ENCODE measurements at regions of chr18 and their contacts with region 1.

Region 1: DNA sequence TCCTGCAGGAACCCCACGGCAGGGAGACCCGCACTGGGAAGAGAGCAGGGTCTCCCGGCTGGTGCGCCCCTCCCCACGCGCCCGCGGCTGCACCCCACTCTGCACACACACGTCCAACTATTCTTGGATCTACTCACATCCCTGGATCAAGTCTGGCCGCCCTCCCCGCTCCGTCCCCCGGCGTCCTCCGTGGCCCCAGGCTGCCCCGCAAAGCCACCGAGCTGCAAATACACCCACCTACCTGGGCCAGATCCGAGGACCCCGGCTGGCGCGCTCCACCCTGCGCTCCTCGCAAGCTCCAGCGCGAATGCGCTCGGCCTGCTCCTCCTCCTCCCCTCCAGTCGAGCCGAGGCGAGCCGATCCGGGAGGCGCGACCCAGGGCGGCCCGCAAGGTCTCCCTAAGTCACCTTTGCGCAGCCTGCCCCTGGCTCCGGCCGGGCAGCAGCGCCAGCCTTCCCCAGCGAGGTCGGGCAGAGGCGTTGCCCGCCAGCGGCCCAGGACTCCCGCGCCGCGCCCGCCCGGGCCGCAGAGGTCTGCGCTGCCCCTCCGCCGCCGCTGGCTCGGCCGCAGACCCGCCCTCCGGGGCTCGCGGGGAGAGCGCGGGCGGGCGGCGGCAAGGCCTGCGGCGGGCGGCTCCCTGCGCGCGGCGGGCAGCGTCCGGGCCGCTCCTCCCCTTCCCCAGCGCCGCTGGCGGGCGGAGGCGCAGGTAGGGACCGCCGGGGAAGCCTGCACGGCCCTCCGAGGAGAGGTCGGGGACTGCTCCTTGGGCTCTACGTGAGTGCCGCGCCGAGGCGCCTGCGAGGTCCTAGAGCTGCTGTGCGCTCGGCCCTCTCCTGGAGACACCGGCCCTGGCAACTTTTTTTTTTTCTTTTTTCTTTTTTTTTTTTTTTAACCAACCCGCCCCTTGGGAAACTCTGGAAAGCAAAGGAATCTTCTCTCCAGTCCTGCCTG is 126.0 kb downstream of the OSBPL1A start:
- DNase-seq: peak; percentile 29 to 78 (median 68)
- H3K4me3 ChIP-seq: peak overlapping the region; percentile 65 to 98 (median 86)
- H3K27ac ChIP-seq: peak overlapping the region; percentile 90 to 100 (median 98)
- H3K27me3 ChIP-seq: no peaks in the 10 kb centered on the region
- CTCF ChIP-seq: peak in 38 of 56 donors; percentile 9 to 57 (median 31)

Region 2: GRCh38 chr18:24176727-24177416 is 94.8 kb before region 1 on chr18:
- intact Hi-C with region 1: loop called (anchors 1 to 5 kb)
- DNase-seq: peak in 9 of 10 donors; percentile 33 to 81 (median 73)
- H3K4me3 ChIP-seq: no peak overlapping the region
- H3K27ac ChIP-seq: peak overlapping the region in 56 of 59 donors; percentile 25 to 88 (median 74)
- H3K27me3 ChIP-seq: no peaks in the 10 kb centered on the region
- CTCF ChIP-seq: peak; percentile 41 to 91 (median 78)

Region 3: GRCh38 chr18:24200494-24201290 is 71.0 kb before region 1 on chr18:
- intact Hi-C with region 1: loop called (anchors 2 kb)
- DNase-seq: peak in 1 of 10 donors; percentile 41
- H3K4me3 ChIP-seq: peak overlapping the region in 33 of 59 donors; percentile 1 to 41 (median 16)
- H3K27ac ChIP-seq: peak overlapping the region; percentile 82 to 100 (median 97)
- H3K27me3 ChIP-seq: no peaks in the 10 kb centered on the region
- CTCF ChIP-seq: peak in 9 of 56 donors; percentile 4 to 44 (median 21)

Region 4: DNA sequence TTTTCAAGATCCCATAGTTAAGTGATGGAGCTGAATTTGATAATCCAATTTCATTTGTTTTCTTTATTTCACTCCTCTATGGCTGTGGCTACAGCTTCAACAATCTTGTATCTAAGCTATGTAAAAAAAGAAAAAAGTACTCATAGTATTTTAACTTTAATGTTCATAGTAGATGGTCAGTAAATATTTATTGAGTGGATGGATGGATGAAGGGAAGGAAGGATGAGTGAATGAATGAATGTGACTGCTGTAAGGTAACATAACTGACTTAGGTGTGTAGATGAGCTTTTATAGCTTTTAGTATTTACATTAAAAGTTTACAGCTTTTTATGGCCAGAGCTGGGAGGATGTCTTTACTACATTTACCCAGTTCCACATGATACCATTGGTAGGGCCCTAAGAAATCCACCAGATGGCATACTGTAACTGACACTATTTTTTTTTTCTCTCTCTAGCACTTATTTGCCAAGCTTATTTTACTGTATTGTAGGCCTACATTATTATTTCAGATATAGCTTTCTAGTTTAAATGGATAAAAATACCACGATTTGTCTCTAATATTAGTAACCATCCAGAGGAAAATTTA is 175.4 kb after region 1 on chr18:
- intact Hi-C with region 1: no loop called
- DNase-seq: no peak
- H3K4me3 ChIP-seq: no peak overlapping the region
- H3K27ac ChIP-seq: no peak overlapping the region
- H3K27me3 ChIP-seq: no peaks in the 10 kb centered on the region
- CTCF ChIP-seq: peak in 9 of 56 donors; percentile 8 to 37 (median 17)

Region 5: GRCh38 chr18:24488824-24489493 is 217.3 kb after region 1 on chr18:
- intact Hi-C with region 1: no loop called
- DNase-seq: no peak
- H3K4me3 ChIP-seq: no peak overlapping the region
- H3K27ac ChIP-seq: no peak overlapping the region
- H3K27me3 ChIP-seq: no peaks in the 10 kb centered on the region
- CTCF ChIP-seq: peak; percentile 77 to 96 (median 89)